Body of pancreas (tissue), 4 donors: ENCODE measurements at regions of chr13 and their contacts with region 1.

Region 1: GRCh38 chr13:58893396-58893795 is 1261.9 kb downstream of the PCDH17 start:
- DNase-seq: no peak
- ATAC-seq: no peak
- H3K4me3 ChIP-seq: no peak overlapping the region
- H3K27ac ChIP-seq: no peak overlapping the region
- H3K4me1 ChIP-seq: no peaks in the 10 kb centered on the region
- H3K27me3 ChIP-seq: no peaks in the 10 kb centered on the region
- CTCF ChIP-seq: no peak
- POLR2A ChIP-seq: no peak

Region 2: GRCh38 chr13:58318495-58319167 is 574.8 kb before region 1 on chr13:
- intact Hi-C with region 1: no loop called
- DNase-seq: no peak
- ATAC-seq: no peak
- H3K4me3 ChIP-seq: no peak overlapping the region
- H3K27ac ChIP-seq: no peak overlapping the region
- H3K4me1 ChIP-seq: no peaks in the 10 kb centered on the region
- H3K27me3 ChIP-seq: no peaks in the 10 kb centered on the region
- CTCF ChIP-seq: no peak
- POLR2A ChIP-seq: no peak

Region 3: GRCh38 chr13:59318320-59318930 is 425.0 kb after region 1 on chr13:
- intact Hi-C with region 1: loop called (anchors 10 kb)
- DNase-seq: peak; percentile 83 to 90 (median 86)
- ATAC-seq: peak; percentile 91
- H3K4me3 ChIP-seq: no peak overlapping the region
- H3K27ac ChIP-seq: peak overlapping the region in 1 of 4 donors; percentile 12
- H3K4me1 ChIP-seq: peaks cover 42% of the 10 kb centered on the region
- H3K27me3 ChIP-seq: no peaks in the 10 kb centered on the region
- CTCF ChIP-seq: peak; percentile 57 to 84 (median 72)
- POLR2A ChIP-seq: no peak